ENCODE measurements at regions of chr15 and their contacts with region 1.

Region 1: GRCh38 chr15:32994810-32995424 is 199.6 kb downstream of the FMN1 start:
- DNase-seq: no peak
- H3K4me3 ChIP-seq: no peak overlapping the region
- H3K27ac ChIP-seq: no peak overlapping the region
- H3K4me1 ChIP-seq: no peaks in the 10 kb centered on the region
- H3K27me3 ChIP-seq: no peaks in the 10 kb centered on the region
- CTCF ChIP-seq: peak in 1 of 3 donors; percentile 17
- EP300 ChIP-seq: no peak
- POLR2A ChIP-seq: no peak

Region 2: DNA sequence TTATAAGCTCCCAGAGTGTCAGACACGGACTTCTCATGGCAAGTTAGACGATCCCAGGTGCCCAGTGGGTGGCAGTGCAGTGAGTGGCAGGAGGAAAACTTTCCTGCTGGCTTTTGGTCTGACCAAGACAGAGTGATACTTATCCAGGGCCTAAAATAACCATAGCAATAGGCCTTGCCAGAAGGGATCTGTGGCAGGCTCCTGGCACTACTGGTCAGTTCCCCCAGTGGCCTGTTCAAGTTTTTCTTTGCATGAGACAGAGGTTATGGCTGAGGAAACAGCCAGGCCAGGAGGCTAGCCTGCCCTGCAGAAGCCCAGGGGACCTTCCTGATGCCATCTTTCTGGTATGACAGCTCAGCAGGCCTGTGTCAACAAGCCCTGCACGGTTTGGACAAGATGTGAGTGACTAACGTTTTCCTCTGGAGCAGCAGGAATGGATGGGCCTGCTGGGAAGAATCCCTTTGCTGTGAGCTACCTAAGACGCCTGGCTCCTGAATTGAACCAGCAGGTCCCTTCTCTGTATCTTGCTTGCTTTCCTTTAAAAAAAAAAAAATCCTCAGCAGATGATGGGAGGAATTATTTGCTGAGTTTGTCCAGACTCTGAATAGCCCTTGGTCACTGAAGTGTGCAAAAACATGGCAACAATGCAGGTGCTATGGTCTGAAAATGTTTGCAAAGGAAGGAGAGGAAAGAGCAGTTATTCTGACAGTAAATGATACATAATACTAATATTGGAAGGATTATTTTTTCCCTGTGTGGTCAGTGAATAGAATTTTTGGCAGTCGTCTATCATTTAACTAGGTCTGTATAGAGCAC is 335.4 kb before region 1 on chr15:
- intact Hi-C with region 1: loop called in 3 of 4 experiments (anchors 5 kb)
- DNase-seq: no peak
- H3K4me3 ChIP-seq: no peak overlapping the region
- H3K27ac ChIP-seq: no peak overlapping the region
- H3K4me1 ChIP-seq: no peaks in the 10 kb centered on the region
- H3K27me3 ChIP-seq: no peaks in the 10 kb centered on the region
- CTCF ChIP-seq: no peak
- EP300 ChIP-seq: no peak
- POLR2A ChIP-seq: no peak